ENCODE measurements at regions of chr9 and their contacts with region 1.

Region 1: GRCh38 chr9:130320723-130321481 is 55.3 kb downstream of the HMCN2 start:
- DNase-seq: peak in 1 of 2 experiments; percentile 79
- H3K4me3 ChIP-seq: no peak overlapping the region
- H3K27ac ChIP-seq: no peak overlapping the region
- H3K4me1 ChIP-seq: peaks cover 0 to 7% (median 1%) of the 10 kb centered on the region in 4 experiments; a peak in 4 of 7 replicates
- H3K27me3 ChIP-seq: no peaks in the 10 kb centered on the region
- CTCF ChIP-seq: peak; percentile 37 to 62 (median 44); a peak in 3 of 4 replicates
- EP300 ChIP-seq: no peak
- POLR2A ChIP-seq: no peak
- RAD21 ChIP-seq: peak in 1 of 2 experiments; percentile 42; a peak in 3 of 4 replicates

Region 2: GRCh38 chr9:130336885-130337284 is 16.0 kb after region 1 on chr9:
- CTCF ChIA-PET with region 1: interaction called, 53 read pairs
- POLR2A ChIA-PET with region 1: no interaction called
- DNase-seq: no peak
- H3K4me3 ChIP-seq: no peak overlapping the region
- H3K27ac ChIP-seq: no peak overlapping the region
- H3K4me1 ChIP-seq: no peaks in the 10 kb centered on the region
- H3K27me3 ChIP-seq: no peaks in the 10 kb centered on the region
- CTCF ChIP-seq: no peak
- EP300 ChIP-seq: no peak
- POLR2A ChIP-seq: no peak
- RAD21 ChIP-seq: no peak

Measured in H1 (cell line).